ENCODE measurements at regions of chr6 and their contacts with region 1.

Region 1: DNA sequence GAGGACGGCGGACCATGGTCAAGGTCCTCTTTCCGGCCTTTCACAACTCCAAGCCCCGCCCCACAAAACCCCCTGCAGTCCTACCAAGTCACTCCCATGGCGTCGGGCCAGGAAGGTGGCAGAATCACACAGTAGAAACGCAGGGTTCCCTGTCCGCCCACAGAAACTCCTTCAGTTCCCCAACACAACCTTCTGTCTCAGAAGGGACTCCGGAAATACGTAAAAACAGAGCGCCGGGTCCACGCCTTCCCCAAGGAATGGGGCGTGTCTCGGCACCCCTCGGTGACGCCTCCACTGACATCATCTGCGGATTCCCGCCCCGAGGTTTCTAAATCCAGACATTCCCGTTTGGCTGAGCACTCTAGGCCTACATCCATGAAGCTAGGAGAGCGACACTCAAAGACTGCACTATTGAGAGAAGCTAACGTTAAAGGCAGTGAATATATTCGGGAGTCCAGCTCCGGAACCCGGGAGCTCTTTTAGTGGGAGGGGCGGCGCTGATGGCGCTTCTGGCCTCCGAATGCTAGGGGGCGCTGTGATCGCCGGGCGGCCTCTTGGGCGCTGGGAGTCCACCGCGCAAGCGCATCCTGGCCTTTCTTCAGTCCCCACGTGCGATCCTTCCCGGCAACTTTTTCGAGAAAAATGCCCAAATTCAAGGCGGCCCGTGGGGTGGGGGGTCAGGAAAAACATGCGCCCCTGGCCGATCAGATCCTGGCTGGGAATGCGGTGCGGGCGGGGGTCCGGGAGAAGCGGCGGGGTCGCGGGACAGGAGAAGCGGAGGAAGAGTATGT is at the starts of genes BYSL and MED20:
- DNase-seq: peak; percentile 94 to 96 (median 95)
- H3K4me3 ChIP-seq: peak within 1 kb of the TSS; percentile 75 to 99
- H3K4me3 Mint-ChIP-seq: peak within 1 kb of the TSS; percentile 99 to 100 (median 100)
- H3K27ac ChIP-seq: peak within 1 kb of the TSS; percentile 91
- H3K27ac Mint-ChIP-seq: peak within 1 kb of the TSS; percentile 98 to 100 (median 100)
- H3K4me1 ChIP-seq: peaks cover 47% of the 10 kb centered on the region
- H3K4me1 Mint-ChIP-seq: peaks cover 34 to 57% (median 47%) of the 10 kb centered on the region in 4 donors
- H3K27me3 ChIP-seq: no peaks in the 10 kb centered on the region
- H3K27me3 Mint-ChIP-seq: peaks cover 0 to 2% of the 10 kb centered on the region in 2 donors
- total RNA-seq, gene BYSL: 7.1 to 9.2 TPM
- total RNA-seq, gene MED20: 10.0 to 11.5 TPM

Region 2: DNA sequence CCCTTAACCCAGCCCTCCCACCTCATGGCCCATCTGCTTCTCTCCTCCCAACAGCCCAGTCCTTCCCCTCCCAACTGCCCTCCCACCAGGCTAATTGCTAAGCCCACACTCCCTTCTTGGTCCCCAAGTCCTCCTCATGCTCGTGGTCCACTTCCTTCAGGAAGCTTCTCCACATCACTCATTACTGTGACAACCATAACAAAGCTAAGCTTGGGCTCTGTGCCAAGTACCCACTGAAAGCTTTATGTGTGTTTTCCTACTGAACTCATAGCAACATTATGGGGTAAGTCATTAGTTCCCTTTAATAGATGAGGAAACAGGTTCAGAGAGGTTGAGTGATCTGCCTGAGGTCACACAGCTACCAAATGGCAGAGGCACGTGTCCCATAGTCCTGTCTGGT is 157.6 kb before region 1 on chr6:
- CTCF ChIA-PET with region 1: no interaction called
- POLR2A ChIA-PET with region 1: no interaction called
- intact Hi-C with region 1: no loop called
- DNase-seq: no peak
- H3K4me3 ChIP-seq: no peak overlapping the region
- H3K4me3 Mint-ChIP-seq: no peak overlapping the region
- H3K27ac ChIP-seq: no peak overlapping the region
- H3K27ac Mint-ChIP-seq: no peak overlapping the region
- H3K4me1 ChIP-seq: no peaks in the 10 kb centered on the region
- H3K4me1 Mint-ChIP-seq: no peaks in the 10 kb centered on the region
- H3K27me3 ChIP-seq: no peaks in the 10 kb centered on the region
- H3K27me3 Mint-ChIP-seq: peaks cover 0 to 4% of the 10 kb centered on the region in 2 donors

Region 3: DNA sequence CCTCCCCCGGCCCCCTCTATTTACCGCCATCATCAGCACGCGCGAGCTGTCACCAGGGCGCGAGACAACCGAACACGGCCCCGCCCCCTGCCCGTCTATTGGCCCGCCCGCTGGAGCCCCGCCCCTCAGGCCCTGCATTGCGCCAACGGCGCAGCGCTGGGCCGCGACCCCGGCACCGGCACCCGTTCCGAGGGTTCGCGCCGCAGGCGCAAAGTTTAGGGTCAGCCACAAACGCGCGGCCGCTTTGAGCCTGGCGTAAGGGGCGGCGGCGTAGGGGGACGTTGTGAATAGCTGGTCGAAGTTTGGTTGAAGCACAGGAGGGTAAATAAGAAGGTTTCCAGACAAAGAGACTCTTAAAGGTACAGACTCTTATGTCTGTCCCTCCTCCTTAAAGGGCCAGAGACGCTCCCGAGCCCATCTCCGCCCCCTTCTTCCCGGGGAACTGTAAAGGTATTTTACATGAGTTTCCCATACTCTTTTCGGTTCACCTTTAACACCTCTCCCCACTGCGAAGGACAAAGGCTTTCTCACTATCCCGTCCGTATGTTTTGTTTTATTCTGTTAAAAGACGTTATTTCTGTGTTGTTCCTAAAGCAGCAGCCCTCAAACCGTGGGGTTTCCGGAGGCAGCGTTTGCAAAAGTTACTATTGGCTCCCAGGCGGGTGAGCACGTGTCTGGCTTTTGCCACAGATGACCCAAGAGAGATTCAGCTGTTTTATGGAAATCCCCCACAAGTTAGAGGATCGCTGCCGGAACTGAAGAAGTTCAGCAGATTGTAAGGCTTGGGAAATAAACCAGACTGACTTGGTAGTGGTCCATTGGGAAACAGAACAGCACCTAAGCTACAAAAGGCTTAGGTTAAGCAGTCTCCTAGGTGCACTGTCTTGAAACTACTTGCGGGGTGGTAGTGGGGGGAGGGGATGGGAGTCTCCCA is 25.5 kb before region 1 on chr6 and contains the start of gene USP49:
- CTCF ChIA-PET with region 1: interaction called, 17 read pairs
- POLR2A ChIA-PET with region 1: interaction called, 16 read pairs
- intact Hi-C with region 1: loop called (anchors 1 kb)
- DNase-seq: peak; percentile 86 to 92 (median 88)
- H3K4me3 ChIP-seq: peak within 1 kb of the TSS; percentile 74 to 91
- H3K4me3 Mint-ChIP-seq: peak within 1 kb of the TSS in 2 of 8 donors; percentile 90 to 98
- H3K27ac ChIP-seq: peak within 1 kb of the TSS; percentile 77
- H3K27ac Mint-ChIP-seq: peak within 1 kb of the TSS in 6 of 7 donors; percentile 79 to 94 (median 90)
- H3K4me1 ChIP-seq: peaks cover 23% of the 10 kb centered on the region
- H3K4me1 Mint-ChIP-seq: peaks cover 9 to 12% (median 10%) of the 10 kb centered on the region in 4 donors
- H3K27me3 ChIP-seq: no peaks in the 10 kb centered on the region
- H3K27me3 Mint-ChIP-seq: no peaks in the 10 kb centered on the region
- total RNA-seq, gene USP49: 1.8 to 2.4 TPM

Region 4: GRCh38 chr6:41909727-41910126 is 11.4 kb before region 1 on chr6:
- CTCF ChIA-PET with region 1: interaction called, 13 read pairs
- POLR2A ChIA-PET with region 1: no interaction called
- intact Hi-C with region 1: no loop called
- DNase-seq: no peak
- H3K4me3 ChIP-seq: no peak overlapping the region
- H3K4me3 Mint-ChIP-seq: no peak overlapping the region
- H3K27ac ChIP-seq: no peak overlapping the region
- H3K27ac Mint-ChIP-seq: peak overlapping the region in 3 of 7 donors; percentile 3 to 78 (median 35)
- H3K4me1 ChIP-seq: no peaks in the 10 kb centered on the region
- H3K4me1 Mint-ChIP-seq: peaks cover 2 to 14% (median 4%) of the 10 kb centered on the region in 4 donors
- H3K27me3 ChIP-seq: no peaks in the 10 kb centered on the region
- H3K27me3 Mint-ChIP-seq: no peaks in the 10 kb centered on the region

Region 5: GRCh38 chr6:42545226-42545773 is 624.2 kb after region 1 on chr6:
- CTCF ChIA-PET with region 1: no interaction called
- POLR2A ChIA-PET with region 1: no interaction called
- intact Hi-C with region 1: no loop called
- DNase-seq: no peak
- H3K4me3 ChIP-seq: no peak overlapping the region
- H3K4me3 Mint-ChIP-seq: no peak overlapping the region
- H3K27ac ChIP-seq: no peak overlapping the region
- H3K27ac Mint-ChIP-seq: no peak overlapping the region
- H3K4me1 ChIP-seq: peaks cover 9% of the 10 kb centered on the region
- H3K4me1 Mint-ChIP-seq: peaks cover 5 to 13% (median 9%) of the 10 kb centered on the region in 4 donors
- H3K27me3 ChIP-seq: no peaks in the 10 kb centered on the region
- H3K27me3 Mint-ChIP-seq: peaks cover 2 to 4% of the 10 kb centered on the region in 2 donors

Measured in CD4-positive, alpha-beta memory T cell (primary cell).